ENCODE measurements at regions of chr15 and their contacts with region 1.

Region 1: DNA sequence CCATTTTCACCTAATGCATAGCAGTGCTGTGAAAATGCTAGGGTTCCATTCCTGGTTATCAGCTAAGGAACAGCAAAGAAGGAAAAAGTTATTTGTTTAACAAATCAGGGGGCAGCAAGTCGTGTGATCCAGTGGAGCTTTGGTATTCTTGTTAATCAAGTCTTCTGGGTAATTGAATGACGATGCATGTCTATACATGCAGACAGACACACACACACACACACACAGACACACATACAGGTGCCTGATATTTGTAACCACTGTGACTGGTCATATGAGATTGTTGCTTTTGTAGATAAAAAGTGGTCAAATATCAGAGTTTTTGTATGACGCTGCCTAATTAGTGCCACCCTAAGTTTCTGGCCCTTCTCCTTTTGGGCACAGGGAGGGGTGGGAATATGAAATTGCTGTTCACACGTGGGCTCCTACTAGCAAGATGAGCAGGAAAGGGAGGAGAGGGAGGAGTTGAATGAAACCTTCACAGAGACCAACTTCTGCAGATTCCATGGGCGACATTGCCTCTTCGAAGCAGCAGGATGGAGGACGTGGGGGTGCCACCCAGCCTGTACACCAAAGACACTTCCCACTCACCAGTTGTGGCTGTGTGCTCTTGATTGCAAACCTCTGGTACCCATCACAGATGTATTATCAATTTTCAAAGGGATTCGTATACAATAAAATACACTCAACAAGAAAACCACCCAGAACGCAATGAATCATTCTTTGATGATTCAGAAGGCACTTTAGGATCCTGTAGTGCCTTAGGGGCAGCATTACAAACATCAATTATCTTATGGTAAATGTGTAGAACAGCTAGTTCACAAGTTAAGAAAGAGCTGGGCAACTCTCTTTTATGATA is 281.9 kb upstream of the ICE2 start:
- DNase-seq: peak; percentile 32
- ATAC-seq: peak; percentile 97
- H3K4me3 Mint-ChIP-seq: no peak overlapping the region
- H3K27ac Mint-ChIP-seq: no peak overlapping the region
- H3K4me1 Mint-ChIP-seq: peaks cover 33% of the 10 kb centered on the region
- H3K27me3 Mint-ChIP-seq: no peaks in the 10 kb centered on the region

Region 2: DNA sequence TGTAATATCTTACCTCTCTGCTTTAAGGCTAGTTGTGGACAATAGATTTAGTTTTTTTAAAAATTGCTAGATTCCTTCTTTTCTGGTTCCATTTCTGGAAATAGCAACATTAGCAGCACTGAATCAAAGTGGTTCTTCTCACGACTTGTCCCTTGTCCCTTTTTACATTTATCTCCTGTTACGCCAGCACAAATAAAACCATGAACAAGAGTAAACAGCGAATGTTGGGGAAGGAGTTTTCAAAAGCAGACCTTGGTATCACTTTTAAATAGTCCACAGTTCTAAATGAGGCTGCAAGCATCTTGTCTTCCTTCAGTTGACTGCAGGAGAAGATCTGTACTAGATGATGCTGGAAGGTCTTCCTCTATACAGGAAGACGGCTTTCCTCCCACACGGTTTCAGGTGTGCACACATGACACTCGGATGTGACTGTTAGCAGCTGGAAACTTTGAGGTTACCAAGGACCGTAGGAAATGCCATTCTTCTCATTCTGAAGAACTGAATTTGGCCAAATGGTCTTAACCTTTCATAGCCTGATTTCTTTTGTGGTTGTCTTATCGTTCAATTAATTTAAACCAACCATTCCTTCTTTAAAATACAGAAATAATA is 30.9 kb before region 1 on chr15:
- CTCF ChIA-PET with region 1: interaction called, 5 read pairs
- POLR2A ChIA-PET with region 1: no interaction called
- intact Hi-C with region 1: loop called in 1 of 2 experiments (anchors 2 kb)
- DNase-seq: peak; percentile 70
- ATAC-seq: peak; percentile 90
- H3K4me3 Mint-ChIP-seq: peak overlapping the region; percentile 34
- H3K27ac Mint-ChIP-seq: peak overlapping the region; percentile 41
- H3K4me1 Mint-ChIP-seq: peaks cover 47% of the 10 kb centered on the region
- H3K27me3 Mint-ChIP-seq: no peaks in the 10 kb centered on the region

Region 3: DNA sequence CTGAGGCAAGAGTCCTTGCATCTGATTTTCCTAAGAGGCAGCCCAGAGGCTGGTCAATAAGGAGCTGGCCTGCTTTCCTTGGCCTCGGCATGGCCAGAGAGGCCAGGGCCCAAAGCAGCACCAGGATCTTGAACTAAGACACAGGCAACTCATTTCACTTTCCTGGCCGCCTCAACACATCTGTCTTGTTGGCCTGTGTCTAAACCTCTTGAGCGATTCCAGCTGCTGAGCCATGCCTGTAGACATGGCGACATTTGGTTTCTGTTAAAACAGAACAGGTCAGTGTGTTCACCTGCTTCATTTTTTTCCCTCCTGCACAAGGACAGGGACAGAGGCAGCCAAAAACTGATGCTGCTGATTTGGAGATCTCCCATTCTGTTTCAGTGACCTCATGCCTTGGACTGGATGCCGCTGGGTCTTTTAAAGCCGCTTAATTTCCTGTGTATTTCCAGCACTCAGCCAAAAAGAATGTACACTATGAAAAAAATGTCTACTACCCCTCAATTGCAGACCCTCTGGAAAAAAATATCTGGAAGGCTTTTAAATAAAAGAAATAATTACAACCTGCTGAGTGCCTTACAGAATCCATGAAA is 15.3 kb before region 1 on chr15:
- CTCF ChIA-PET with region 1: interaction called, 8 read pairs
- POLR2A ChIA-PET with region 1: no interaction called
- intact Hi-C with region 1: loop called in 1 of 2 experiments (anchors 1 kb)
- DNase-seq: no peak
- ATAC-seq: no peak
- H3K4me3 Mint-ChIP-seq: no peak overlapping the region
- H3K27ac Mint-ChIP-seq: no peak overlapping the region
- H3K4me1 Mint-ChIP-seq: peaks cover 4% of the 10 kb centered on the region
- H3K27me3 Mint-ChIP-seq: no peaks in the 10 kb centered on the region

Measured in activated CD4-positive, alpha-beta T cell treated with anti-CD3 and anti-CD28 coated beads for 36 hours (primary cell).